HEK293 (cell line): ENCODE measurements at regions of chr7 and their contacts with region 1.

Region 1: DNA sequence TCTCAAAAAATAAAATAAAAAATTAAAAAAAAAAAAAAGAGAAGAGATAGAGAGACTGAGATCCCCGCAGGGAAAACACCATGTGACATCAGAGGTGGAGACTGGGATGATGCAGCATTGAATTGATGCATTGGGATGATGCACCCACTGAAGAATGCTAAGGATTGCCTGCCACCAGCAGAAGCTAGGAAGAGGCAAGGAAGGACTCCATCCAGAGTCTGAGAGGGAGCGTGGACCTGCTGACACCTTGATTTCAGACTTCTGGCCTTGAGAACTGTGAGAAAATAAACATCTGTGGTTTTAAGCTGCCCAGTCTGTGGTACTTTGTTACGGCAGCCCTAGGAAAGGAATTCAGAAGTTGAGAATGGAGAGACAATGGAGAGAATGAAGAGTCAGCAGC is 89.8 kb upstream of the PRPS1L1 start:
- H3K4me3 ChIP-seq: no peak overlapping the region
- H3K27ac ChIP-seq: no peak overlapping the region
- H3K4me1 ChIP-seq: no peaks in the 10 kb centered on the region
- CTCF ChIP-seq: no peak

Region 2: GRCh38 chr7:18040196-18040595 is 77.3 kb before region 1 on chr7:
- CTCF ChIA-PET with region 1: interaction called, 12 read pairs
- POLR2A ChIA-PET with region 1: no interaction called
- H3K4me3 ChIP-seq: no peak overlapping the region
- H3K27ac ChIP-seq: no peak overlapping the region
- H3K4me1 ChIP-seq: no peaks in the 10 kb centered on the region
- CTCF ChIP-seq: no peak

Region 3: GRCh38 chr7:18163091-18163490 is 45.6 kb after region 1 on chr7:
- CTCF ChIA-PET with region 1: no interaction called
- POLR2A ChIA-PET with region 1: no interaction called
- H3K4me3 ChIP-seq: no peak overlapping the region
- H3K27ac ChIP-seq: no peak overlapping the region
- H3K4me1 ChIP-seq: peaks cover 5% of the 10 kb centered on the region; the same call in 1 of the 2 replicates
- CTCF ChIP-seq: no peak